ENCODE measurements at regions of chr6 and their contacts with region 1.

Region 1: DNA sequence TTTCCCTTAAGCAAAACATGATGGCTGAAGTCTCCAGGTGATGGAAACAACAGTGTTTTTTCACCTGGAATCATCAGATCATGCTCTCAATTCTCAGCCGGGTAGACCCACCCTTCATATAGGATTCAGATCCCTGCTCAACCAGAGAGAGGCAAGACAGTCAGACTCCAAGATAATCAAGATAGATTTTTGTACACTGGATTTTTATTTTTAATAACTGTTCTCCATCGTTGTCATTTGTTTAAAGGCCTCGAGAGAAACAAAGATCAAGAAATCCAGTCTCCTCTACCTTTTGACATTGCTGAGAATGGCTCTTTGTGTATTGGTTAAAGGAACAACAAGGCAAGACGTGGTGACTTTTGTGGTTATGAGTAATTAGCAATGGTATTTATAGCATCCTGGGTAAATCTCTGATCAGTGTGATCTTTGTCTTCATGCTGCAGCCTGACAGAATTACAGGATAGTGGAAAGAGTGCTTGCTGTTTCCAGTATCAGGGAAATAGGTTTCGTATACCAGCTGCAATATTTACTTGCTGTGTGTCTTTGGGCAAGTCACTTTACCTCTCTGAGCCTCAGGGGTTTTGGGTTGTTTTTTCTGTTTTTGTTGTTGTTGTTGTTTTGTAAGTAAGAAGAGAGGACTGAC is 29.9 kb downstream of the ID4 start:
- DNase-seq: peak; percentile 91
- H3K4me3 ChIP-seq: no peak overlapping the region
- H3K27ac ChIP-seq: peak overlapping the region; percentile 24
- H3K4me1 ChIP-seq: peaks cover 16% of the 10 kb centered on the region
- H3K27me3 ChIP-seq: no peaks in the 10 kb centered on the region
- CTCF ChIP-seq: no peak

Region 2: DNA sequence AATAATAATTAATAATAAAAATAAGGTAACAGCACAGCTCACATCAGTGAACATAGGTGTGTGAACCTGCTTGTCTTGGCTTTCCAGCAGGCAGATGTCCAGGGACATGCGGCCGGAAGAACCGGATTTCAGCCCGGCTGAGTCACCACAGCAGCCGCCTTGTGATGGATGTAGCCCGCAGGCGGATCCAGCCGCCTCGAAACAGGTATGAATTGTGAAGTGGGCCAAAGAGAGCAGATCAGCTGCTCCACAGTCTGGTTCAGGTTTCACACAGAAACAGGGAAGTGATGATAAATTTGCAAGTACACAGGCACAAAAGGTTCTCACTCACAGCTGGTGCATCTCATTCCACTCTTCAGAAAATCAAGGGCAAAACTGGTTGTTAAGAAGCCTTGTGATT is 25.2 kb after region 1 on chr6:
- CTCF ChIA-PET with region 1: no interaction called
- dilution Hi-C with region 1: no loop called
- in situ Hi-C with region 1: no loop called
- intact Hi-C with region 1: no loop called
- DNase-seq: peak; percentile 96
- H3K4me3 ChIP-seq: no peak overlapping the region
- H3K27ac ChIP-seq: peak overlapping the region; percentile 45
- H3K4me1 ChIP-seq: peaks cover 38% of the 10 kb centered on the region
- H3K27me3 ChIP-seq: no peaks in the 10 kb centered on the region
- CTCF ChIP-seq: no peak

Region 3: GRCh38 chr6:19906171-19906570 is 39.1 kb after region 1 on chr6:
- CTCF ChIA-PET with region 1: no interaction called
- dilution Hi-C with region 1: no loop called
- in situ Hi-C with region 1: no loop called
- intact Hi-C with region 1: loop called (anchors 5 kb)
- DNase-seq: no peak
- H3K4me3 ChIP-seq: no peak overlapping the region
- H3K27ac ChIP-seq: no peak overlapping the region
- H3K4me1 ChIP-seq: peaks cover 17% of the 10 kb centered on the region
- H3K27me3 ChIP-seq: no peaks in the 10 kb centered on the region
- CTCF ChIP-seq: no peak